Caco-2 (cell line): ENCODE measurements at regions of chr17 and their contacts with region 1.

Region 1: GRCh38 chr17:45135192-45135977 is at the start of gene ACBD4:
- DNase-seq: peak; percentile 97 to 98
- H3K4me3 ChIP-seq: peak within 1 kb of the TSS; percentile 56
- H3K4me3 Mint-ChIP-seq: peak within 1 kb of the TSS; percentile 81
- H3K27ac Mint-ChIP-seq: peak within 1 kb of the TSS; percentile 56
- H3K4me1 ChIP-seq: peaks cover 17% of the 10 kb centered on the region
- H3K4me1 Mint-ChIP-seq: peaks cover 11% of the 10 kb centered on the region
- H3K27me3 ChIP-seq: no peaks in the 10 kb centered on the region
- H3K27me3 Mint-ChIP-seq: no peaks in the 10 kb centered on the region
- CTCF ChIP-seq: peak; percentile 100
- total RNA-seq, gene ACBD4: 21.2 and 21.6 TPM in 2 replicates

Region 2: DNA sequence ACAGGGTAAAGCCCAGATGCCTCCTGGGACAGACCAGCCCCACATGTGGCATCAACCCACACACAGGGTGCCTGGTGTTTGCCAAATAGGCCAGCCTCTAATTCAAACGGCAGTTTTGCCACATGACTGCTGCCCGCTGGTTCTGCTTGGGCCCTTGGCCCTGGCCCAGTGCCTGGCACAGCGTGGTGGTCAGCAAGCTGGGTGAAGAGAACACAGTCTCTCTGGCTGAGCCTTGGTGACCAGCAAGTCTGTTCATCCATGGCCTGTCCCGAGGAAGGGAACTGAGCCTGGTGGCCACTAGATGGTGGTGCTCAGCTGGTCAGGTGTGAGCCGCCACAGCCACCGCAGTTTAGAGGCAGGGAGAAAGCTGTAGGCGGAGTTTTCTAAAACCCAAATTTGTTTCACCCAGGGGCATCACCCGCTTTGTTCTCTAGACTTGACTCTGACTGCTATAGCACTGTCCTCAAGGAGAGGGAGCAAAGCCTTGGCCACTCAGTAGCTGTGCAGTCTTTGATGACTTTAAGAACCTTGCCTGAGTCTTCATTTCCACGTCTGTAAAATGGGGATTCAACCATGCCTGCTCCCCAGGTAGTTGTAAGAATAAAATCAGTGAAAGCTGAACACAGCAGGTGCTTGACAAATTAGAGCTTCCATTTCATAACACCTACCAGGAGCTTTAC is 215.4 kb before region 1 on chr17:
- CTCF ChIA-PET with region 1: interaction called, 6 read pairs
- POLR2A ChIA-PET with region 1: no interaction called
- intact Hi-C with region 1: loop called (anchors 5 kb)
- DNase-seq: peak; percentile 84 to 86
- H3K4me3 ChIP-seq: no peak overlapping the region
- H3K4me3 Mint-ChIP-seq: no peak overlapping the region
- H3K27ac Mint-ChIP-seq: no peak overlapping the region
- H3K4me1 ChIP-seq: peaks cover 6% of the 10 kb centered on the region; the same call in 1 of the 2 replicates
- H3K4me1 Mint-ChIP-seq: no peaks in the 10 kb centered on the region
- H3K27me3 ChIP-seq: no peaks in the 10 kb centered on the region
- H3K27me3 Mint-ChIP-seq: peaks cover 6% of the 10 kb centered on the region
- CTCF ChIP-seq: peak; percentile 77 to 89

Region 3: GRCh38 chr17:45042346-45043120 is 92.9 kb before region 1 on chr17:
- CTCF ChIA-PET with region 1: no interaction called
- POLR2A ChIA-PET with region 1: no interaction called
- intact Hi-C with region 1: no loop called
- DNase-seq: no peak
- H3K4me3 ChIP-seq: no peak overlapping the region
- H3K4me3 Mint-ChIP-seq: no peak overlapping the region
- H3K27ac Mint-ChIP-seq: no peak overlapping the region
- H3K4me1 ChIP-seq: peaks cover 9% of the 10 kb centered on the region; the same call in 1 of the 2 replicates
- H3K4me1 Mint-ChIP-seq: no peaks in the 10 kb centered on the region
- H3K27me3 ChIP-seq: no peaks in the 10 kb centered on the region
- H3K27me3 Mint-ChIP-seq: no peaks in the 10 kb centered on the region
- CTCF ChIP-seq: no peak

Region 4: GRCh38 chr17:45108595-45109521 is 26.5 kb before region 1 on chr17:
- CTCF ChIA-PET with region 1: interaction called, 23 read pairs
- POLR2A ChIA-PET with region 1: no interaction called
- intact Hi-C with region 1: loop called (anchors 1 kb)
- DNase-seq: peak in 1 of 2 experiments; percentile 37
- H3K4me3 ChIP-seq: no peak overlapping the region
- H3K4me3 Mint-ChIP-seq: no peak overlapping the region
- H3K27ac Mint-ChIP-seq: peak overlapping the region; percentile 16
- H3K4me1 ChIP-seq: no peaks in the 10 kb centered on the region
- H3K4me1 Mint-ChIP-seq: no peaks in the 10 kb centered on the region
- H3K27me3 ChIP-seq: no peaks in the 10 kb centered on the region
- H3K27me3 Mint-ChIP-seq: no peaks in the 10 kb centered on the region
- CTCF ChIP-seq: no peak

Region 5: GRCh38 chr17:45161019-45161825 is 25.8 kb after region 1 on chr17:
- CTCF ChIA-PET with region 1: interaction called, 48 read pairs
- POLR2A ChIA-PET with region 1: interaction called, 22 read pairs
- intact Hi-C with region 1: loop called (anchors 1 kb)
- DNase-seq: peak; percentile 99 to 100
- H3K4me3 ChIP-seq: peak overlapping the region; percentile 61
- H3K4me3 Mint-ChIP-seq: peak overlapping the region; percentile 77
- H3K27ac Mint-ChIP-seq: peak overlapping the region; percentile 99
- H3K4me1 ChIP-seq: peaks cover 45% of the 10 kb centered on the region
- H3K4me1 Mint-ChIP-seq: peaks cover 27% of the 10 kb centered on the region
- H3K27me3 ChIP-seq: no peaks in the 10 kb centered on the region
- H3K27me3 Mint-ChIP-seq: no peaks in the 10 kb centered on the region
- CTCF ChIP-seq: no peak

Region 6: DNA sequence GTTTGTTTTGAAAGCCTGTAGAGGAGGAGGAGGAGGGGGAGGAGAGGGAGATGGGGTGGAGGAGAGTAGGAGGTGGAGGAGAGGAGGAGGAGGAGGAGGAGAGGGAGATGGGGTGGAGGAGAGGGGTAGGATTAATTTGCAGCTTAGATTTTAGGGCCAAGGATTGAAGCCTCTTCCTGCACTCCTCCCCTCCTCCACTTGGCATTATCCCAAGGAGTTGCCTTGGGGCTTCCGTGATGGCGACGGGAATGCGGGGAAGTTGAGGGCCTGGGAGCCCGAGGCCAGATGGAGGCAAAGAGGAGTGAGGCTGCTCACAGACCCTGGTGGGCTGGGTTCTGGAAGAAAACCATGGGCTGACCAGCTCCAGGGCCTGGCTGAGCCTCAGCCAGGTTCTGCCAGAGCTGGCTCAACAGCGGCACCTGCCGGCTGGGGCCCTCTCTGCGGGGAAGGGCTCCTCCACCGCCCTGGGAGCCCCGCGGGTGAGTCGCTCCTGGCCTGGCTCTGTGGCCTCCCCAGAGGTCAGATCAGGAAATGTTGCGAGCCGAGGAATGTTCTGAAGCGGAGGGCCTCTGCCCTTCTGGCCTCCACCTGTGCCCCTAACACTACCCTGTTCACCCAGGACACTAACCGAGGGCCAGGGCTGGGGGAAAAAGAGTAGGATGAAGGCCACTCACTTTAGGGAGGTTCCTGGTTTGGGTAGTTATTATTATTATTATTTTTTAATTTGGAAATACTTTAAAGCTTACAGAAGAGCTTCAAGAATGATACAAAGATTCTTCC is 62.4 kb after region 1 on chr17:
- CTCF ChIA-PET with region 1: interaction called, 168 read pairs
- POLR2A ChIA-PET with region 1: interaction called, 6 read pairs
- intact Hi-C with region 1: loop called (anchors 1 kb)
- DNase-seq: peak; percentile 96 to 99
- H3K4me3 ChIP-seq: no peak overlapping the region
- H3K4me3 Mint-ChIP-seq: no peak overlapping the region
- H3K27ac Mint-ChIP-seq: peak overlapping the region; percentile 85
- H3K4me1 ChIP-seq: peaks cover 33% of the 10 kb centered on the region
- H3K4me1 Mint-ChIP-seq: peaks cover 14% of the 10 kb centered on the region
- H3K27me3 ChIP-seq: no peaks in the 10 kb centered on the region
- H3K27me3 Mint-ChIP-seq: no peaks in the 10 kb centered on the region
- CTCF ChIP-seq: peak; percentile 99 to 100

Region 7: DNA sequence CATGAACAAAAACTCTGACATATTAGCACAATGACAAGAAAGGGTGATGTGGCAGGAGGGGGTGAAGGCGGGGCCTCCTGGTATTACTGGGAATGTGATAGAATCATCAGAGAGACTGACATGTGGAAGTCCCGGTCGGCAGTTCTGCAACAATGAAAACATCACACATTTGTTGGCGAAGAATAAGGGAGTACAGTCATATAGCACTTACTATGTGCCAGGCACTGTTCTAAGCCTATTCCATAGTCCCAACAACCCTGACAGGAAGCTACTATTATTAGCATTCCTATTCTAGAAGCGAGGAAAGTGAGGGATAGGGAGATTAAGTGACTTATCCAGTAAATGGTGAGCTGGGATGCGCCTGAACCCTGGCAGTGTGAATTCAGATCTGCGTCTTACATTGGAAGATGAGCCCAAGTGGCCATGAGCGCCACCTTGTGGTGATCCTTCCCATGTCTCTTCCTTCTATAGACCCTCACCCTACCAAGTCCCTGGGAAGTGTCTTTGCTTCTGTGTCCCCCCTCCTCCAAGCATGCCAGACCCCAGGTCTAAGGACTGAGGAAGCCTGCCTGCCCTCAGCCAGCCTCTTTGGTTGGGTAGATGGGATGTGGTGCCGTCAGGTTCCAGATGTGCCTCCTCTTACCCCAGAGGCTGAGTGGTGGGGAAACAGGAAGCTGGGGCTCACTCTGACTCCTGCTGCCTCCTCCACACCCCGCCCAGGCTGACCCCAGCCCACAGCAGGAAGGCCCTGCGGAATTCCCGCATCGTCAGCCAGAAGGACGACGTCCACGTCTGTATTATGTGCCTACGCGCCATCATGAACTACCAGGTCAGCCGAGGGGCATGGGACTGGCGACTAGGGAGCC is 100.3 kb after region 1 on chr17:
- CTCF ChIA-PET with region 1: interaction called, 25 read pairs
- POLR2A ChIA-PET with region 1: no interaction called
- intact Hi-C with region 1: loop called (anchors 1 kb)
- DNase-seq: peak; percentile 72 to 77
- H3K4me3 ChIP-seq: no peak overlapping the region
- H3K4me3 Mint-ChIP-seq: no peak overlapping the region
- H3K27ac Mint-ChIP-seq: no peak overlapping the region
- H3K4me1 ChIP-seq: peaks cover 6% of the 10 kb centered on the region; the same call in 1 of the 2 replicates
- H3K4me1 Mint-ChIP-seq: no peaks in the 10 kb centered on the region
- H3K27me3 ChIP-seq: no peaks in the 10 kb centered on the region
- H3K27me3 Mint-ChIP-seq: peaks cover 4% of the 10 kb centered on the region
- CTCF ChIP-seq: peak; percentile 82 to 86

Region 8: GRCh38 chr17:45317112-45317928 is 181.9 kb after region 1 on chr17:
- CTCF ChIA-PET with region 1: interaction called, 14 read pairs
- POLR2A ChIA-PET with region 1: interaction called, 3 read pairs
- intact Hi-C with region 1: no loop called
- DNase-seq: peak; percentile 100
- H3K4me3 ChIP-seq: peak overlapping the region; percentile 63
- H3K4me3 Mint-ChIP-seq: peak overlapping the region; percentile 89
- H3K27ac Mint-ChIP-seq: peak overlapping the region; percentile 96
- H3K4me1 ChIP-seq: peaks cover 31% of the 10 kb centered on the region
- H3K4me1 Mint-ChIP-seq: peaks cover 49% of the 10 kb centered on the region
- H3K27me3 ChIP-seq: no peaks in the 10 kb centered on the region
- H3K27me3 Mint-ChIP-seq: no peaks in the 10 kb centered on the region
- CTCF ChIP-seq: peak in 1 of 2 experiments; percentile 5